ENCODE measurements at regions of chr22 and their contacts with region 1.

Region 1: GRCh38 chr22:26516503-26516902 is 4.2 kb upstream of the TFIP11 start:
- DNase-seq: no peak
- H3K4me3 Mint-ChIP-seq: no peak overlapping the region
- H3K27ac Mint-ChIP-seq: no peak overlapping the region
- H3K4me1 Mint-ChIP-seq: peaks cover 24% of the 10 kb centered on the region
- H3K27me3 Mint-ChIP-seq: no peaks in the 10 kb centered on the region

Region 2: GRCh38 chr22:26359156-26359555 is 157.3 kb before region 1 on chr22:
- CTCF ChIA-PET with region 1: interaction called, 10 read pairs
- POLR2A ChIA-PET with region 1: no interaction called
- DNase-seq: no peak
- H3K4me3 Mint-ChIP-seq: no peak overlapping the region
- H3K27ac Mint-ChIP-seq: no peak overlapping the region
- H3K4me1 Mint-ChIP-seq: peaks cover 7% of the 10 kb centered on the region
- H3K27me3 Mint-ChIP-seq: peaks cover 15% of the 10 kb centered on the region

Region 3: GRCh38 chr22:26556904-26557303 is 40.4 kb after region 1 on chr22:
- CTCF ChIA-PET with region 1: no interaction called
- POLR2A ChIA-PET with region 1: no interaction called
- DNase-seq: no peak
- H3K4me3 Mint-ChIP-seq: no peak overlapping the region
- H3K27ac Mint-ChIP-seq: no peak overlapping the region
- H3K4me1 Mint-ChIP-seq: peaks cover 7% of the 10 kb centered on the region
- H3K27me3 Mint-ChIP-seq: no peaks in the 10 kb centered on the region